CD8-positive, alpha-beta T cell (primary cell): ENCODE measurements at regions of chr3 and their contacts with region 1.

Region 1: DNA sequence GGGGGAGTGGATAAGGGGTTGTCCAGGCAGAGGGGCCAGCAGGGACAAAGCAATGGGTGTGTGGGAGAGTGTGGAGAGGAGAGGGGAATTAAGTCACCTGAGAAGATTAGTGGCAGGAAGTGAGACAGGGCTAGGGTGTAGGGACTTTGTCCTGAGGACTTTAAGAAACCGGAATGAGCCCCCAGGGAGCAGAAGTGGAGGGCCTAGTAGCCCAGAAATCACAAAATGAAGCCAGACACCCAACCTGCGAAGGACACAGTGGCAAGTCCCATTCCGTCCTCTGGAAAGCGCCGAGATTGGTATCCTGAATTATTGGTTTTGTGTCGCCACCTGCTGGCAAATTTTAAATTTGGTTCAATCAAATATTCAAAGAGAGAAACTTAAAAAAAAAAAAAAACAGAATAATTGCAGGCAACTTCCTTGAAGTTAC is 78.0 kb upstream of the SLC25A36 start:
- DNase-seq: peak in 6 of 9 experiments; percentile 0 to 59 (median 19)
- ATAC-seq: no peak
- H3K4me3 ChIP-seq: no peak overlapping the region
- H3K4me3 Mint-ChIP-seq: no peak overlapping the region
- H3K27ac ChIP-seq: no peak overlapping the region
- H3K27ac Mint-ChIP-seq: no peak overlapping the region
- H3K4me1 ChIP-seq: no peaks in the 10 kb centered on the region
- H3K4me1 Mint-ChIP-seq: peaks cover 6% of the 10 kb centered on the region
- H3K27me3 ChIP-seq: no peaks in the 10 kb centered on the region
- H3K27me3 Mint-ChIP-seq: peaks cover 3% of the 10 kb centered on the region
- CTCF ChIP-seq: peak; percentile 65

Region 2: DNA sequence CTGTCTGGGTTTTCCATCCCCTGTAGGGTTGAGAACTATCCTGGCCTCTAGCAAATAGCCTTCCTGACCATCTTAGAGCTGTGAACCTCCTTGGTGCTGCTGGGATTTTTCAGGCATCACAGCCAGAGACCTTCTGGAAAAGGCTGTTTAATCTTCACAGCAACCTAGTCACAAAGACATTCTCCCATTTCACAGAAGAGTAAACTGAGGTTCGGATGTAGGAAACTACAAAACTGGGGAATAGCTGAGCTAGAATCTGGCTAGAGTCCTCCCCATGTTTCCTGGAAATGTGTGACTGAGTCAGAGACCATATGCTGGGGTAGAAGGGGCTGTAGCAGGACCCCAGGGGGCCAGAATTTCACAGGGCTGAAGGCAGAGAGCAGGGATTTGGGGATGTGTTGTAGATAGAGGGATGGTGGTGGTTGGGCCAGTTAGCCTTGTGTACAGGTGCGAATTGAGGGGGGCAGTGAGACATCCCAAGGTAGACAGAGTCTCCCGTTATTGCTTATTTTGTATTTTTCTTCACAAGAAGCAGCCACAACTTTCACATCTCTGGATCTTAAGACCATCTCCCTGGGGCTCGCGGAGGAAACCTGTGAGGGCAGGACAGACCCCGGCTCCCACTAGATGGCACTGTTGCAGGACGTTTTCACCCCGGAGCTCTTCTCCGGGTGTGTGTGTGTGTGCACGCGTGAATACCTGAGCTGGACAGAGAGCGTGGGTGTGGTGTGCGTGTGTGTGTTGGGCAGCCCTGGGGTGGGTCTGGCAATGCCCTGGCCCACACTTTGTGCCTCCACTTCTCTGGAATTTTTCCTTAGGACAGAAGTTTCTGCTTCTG is 1752.0 kb before region 1 on chr3:
- CTCF ChIA-PET with region 1: no interaction called
- POLR2A ChIA-PET with region 1: no interaction called
- intact Hi-C with region 1: loop called in 1 of 2 experiments (anchors 5 kb)
- DNase-seq: peak; percentile 7 to 63 (median 49)
- ATAC-seq: no peak
- H3K4me3 ChIP-seq: no peak overlapping the region
- H3K4me3 Mint-ChIP-seq: no peak overlapping the region
- H3K27ac ChIP-seq: no peak overlapping the region
- H3K27ac Mint-ChIP-seq: no peak overlapping the region
- H3K4me1 ChIP-seq: no peaks in the 10 kb centered on the region
- H3K4me1 Mint-ChIP-seq: peaks cover 9% of the 10 kb centered on the region
- H3K27me3 ChIP-seq: no peaks in the 10 kb centered on the region
- H3K27me3 Mint-ChIP-seq: peaks cover 10% of the 10 kb centered on the region
- CTCF ChIP-seq: peak; percentile 58

Region 3: DNA sequence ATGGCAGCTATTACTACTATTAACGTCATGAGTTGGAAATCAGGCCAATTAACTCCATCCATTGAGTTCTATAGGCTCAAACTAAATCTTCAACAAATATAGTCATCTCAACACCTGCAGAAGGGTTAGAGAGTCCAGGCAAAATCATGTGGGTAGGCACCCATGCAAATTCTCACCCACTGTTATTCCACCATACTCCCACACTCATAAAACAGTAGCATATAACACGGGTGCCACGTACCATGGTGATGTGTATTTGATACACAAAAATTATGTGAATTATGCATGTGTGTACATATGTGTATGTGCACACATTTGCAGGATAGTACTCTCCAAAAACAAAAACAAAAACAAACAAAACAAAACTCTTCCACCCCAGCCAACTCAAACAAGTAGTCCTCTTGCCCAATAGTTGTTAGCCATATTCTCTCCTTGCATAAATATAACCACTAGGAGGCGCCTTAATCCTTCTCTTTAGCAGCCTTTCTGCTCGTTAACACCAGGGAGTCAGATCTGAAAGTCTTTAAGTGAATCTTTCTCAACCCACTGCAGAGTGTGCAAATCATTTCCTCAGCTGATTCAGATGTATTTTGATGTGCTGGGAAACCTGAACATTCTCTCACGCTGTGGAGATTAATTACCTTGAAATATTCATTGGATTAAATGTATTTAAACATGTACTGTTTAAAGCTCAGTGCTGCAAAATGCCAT is 1436.2 kb before region 1 on chr3:
- CTCF ChIA-PET with region 1: interaction called, 4 read pairs
- POLR2A ChIA-PET with region 1: no interaction called
- intact Hi-C with region 1: loop called in 1 of 2 experiments (anchors 1 kb)
- DNase-seq: peak in 2 of 9 experiments; percentile 47 to 58
- ATAC-seq: no peak
- H3K4me3 ChIP-seq: no peak overlapping the region
- H3K4me3 Mint-ChIP-seq: no peak overlapping the region
- H3K27ac ChIP-seq: no peak overlapping the region
- H3K27ac Mint-ChIP-seq: no peak overlapping the region
- H3K4me1 ChIP-seq: no peaks in the 10 kb centered on the region
- H3K4me1 Mint-ChIP-seq: peaks cover 4% of the 10 kb centered on the region
- H3K27me3 ChIP-seq: peaks cover 0 to 2% of the 10 kb centered on the region in 2 experiments
- H3K27me3 Mint-ChIP-seq: no peaks in the 10 kb centered on the region
- CTCF ChIP-seq: peak; percentile 73

Region 4: GRCh38 chr3:139935016-139935865 is 928.4 kb before region 1 on chr3 and contains the start of gene CLSTN2:
- CTCF ChIA-PET with region 1: no interaction called
- POLR2A ChIA-PET with region 1: no interaction called
- intact Hi-C with region 1: loop called in 1 of 2 experiments (anchors 10 kb)
- DNase-seq: no peak
- ATAC-seq: no peak
- H3K4me3 ChIP-seq: no peak within 1 kb of the TSS
- H3K4me3 Mint-ChIP-seq: peak within 1 kb of the TSS; percentile 26
- H3K27ac ChIP-seq: no peak within 1 kb of the TSS
- H3K27ac Mint-ChIP-seq: no peak within 1 kb of the TSS
- H3K4me1 ChIP-seq: no peaks in the 10 kb centered on the region
- H3K4me1 Mint-ChIP-seq: peaks cover 9% of the 10 kb centered on the region
- H3K27me3 ChIP-seq: peaks cover 5 to 7% of the 10 kb centered on the region in 2 experiments
- H3K27me3 Mint-ChIP-seq: peaks cover 42% of the 10 kb centered on the region
- CTCF ChIP-seq: no peak
- total RNA-seq, gene CLSTN2: not detected

Region 5: DNA sequence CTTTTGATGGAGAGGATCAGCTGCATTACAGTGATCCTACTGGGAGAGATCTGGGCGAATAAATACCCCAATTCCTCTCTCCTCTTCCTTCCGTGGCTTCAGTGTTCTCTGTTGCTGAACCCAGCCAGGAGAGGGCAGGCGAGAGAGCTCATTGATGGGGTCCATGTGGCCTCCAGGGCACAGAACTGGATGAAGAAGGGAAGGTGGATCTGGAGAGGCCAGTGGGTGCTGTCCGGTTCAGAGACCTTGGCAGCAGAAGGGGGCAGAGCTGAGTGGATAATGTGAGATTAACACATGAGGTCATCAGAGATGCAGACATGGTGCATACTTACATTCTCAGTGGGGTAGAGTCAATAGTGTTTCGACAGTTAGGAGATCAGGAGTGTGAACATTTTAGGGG is 735.0 kb before region 1 on chr3:
- CTCF ChIA-PET with region 1: no interaction called
- POLR2A ChIA-PET with region 1: no interaction called
- intact Hi-C with region 1: loop called in 1 of 2 experiments (anchors 2 kb)
- DNase-seq: peak in 2 of 9 experiments; percentile 1 to 5
- ATAC-seq: no peak
- H3K4me3 ChIP-seq: no peak overlapping the region
- H3K4me3 Mint-ChIP-seq: no peak overlapping the region
- H3K27ac ChIP-seq: no peak overlapping the region
- H3K27ac Mint-ChIP-seq: no peak overlapping the region
- H3K4me1 ChIP-seq: no peaks in the 10 kb centered on the region
- H3K4me1 Mint-ChIP-seq: no peaks in the 10 kb centered on the region
- H3K27me3 ChIP-seq: no peaks in the 10 kb centered on the region
- H3K27me3 Mint-ChIP-seq: no peaks in the 10 kb centered on the region
- CTCF ChIP-seq: no peak

Region 6: DNA sequence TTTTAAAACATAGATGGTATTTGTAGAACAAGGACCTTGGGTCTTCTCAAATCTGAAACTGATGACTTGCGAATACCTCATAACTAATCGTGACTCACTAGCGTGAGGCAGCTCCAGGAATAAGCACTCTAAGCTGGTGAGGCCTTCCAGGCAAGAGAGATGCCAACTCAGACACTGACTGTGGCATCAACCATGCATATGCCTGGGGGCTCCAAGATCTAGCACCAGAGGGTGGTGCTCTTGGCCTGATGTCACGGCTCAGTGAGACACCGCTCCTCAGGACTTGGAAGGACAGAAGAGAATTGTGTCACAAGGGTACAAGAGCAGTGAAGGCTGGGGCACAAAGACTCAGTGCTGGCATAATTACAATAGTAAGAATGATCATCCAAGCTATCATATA is 310.7 kb before region 1 on chr3:
- CTCF ChIA-PET with region 1: no interaction called
- POLR2A ChIA-PET with region 1: no interaction called
- intact Hi-C with region 1: loop called (anchors 2 to 10 kb)
- DNase-seq: peak in 1 of 9 experiments; percentile 3
- ATAC-seq: no peak
- H3K4me3 ChIP-seq: no peak overlapping the region
- H3K4me3 Mint-ChIP-seq: no peak overlapping the region
- H3K27ac ChIP-seq: no peak overlapping the region
- H3K27ac Mint-ChIP-seq: no peak overlapping the region
- H3K4me1 ChIP-seq: no peaks in the 10 kb centered on the region
- H3K4me1 Mint-ChIP-seq: no peaks in the 10 kb centered on the region
- H3K27me3 ChIP-seq: no peaks in the 10 kb centered on the region
- H3K27me3 Mint-ChIP-seq: no peaks in the 10 kb centered on the region
- CTCF ChIP-seq: no peak

Region 7: GRCh38 chr3:140715027-140715426 is 148.6 kb before region 1 on chr3:
- CTCF ChIA-PET with region 1: no interaction called
- POLR2A ChIA-PET with region 1: no interaction called
- intact Hi-C with region 1: no loop called
- DNase-seq: no peak
- ATAC-seq: no peak
- H3K4me3 ChIP-seq: no peak overlapping the region
- H3K4me3 Mint-ChIP-seq: no peak overlapping the region
- H3K27ac ChIP-seq: no peak overlapping the region
- H3K27ac Mint-ChIP-seq: no peak overlapping the region
- H3K4me1 ChIP-seq: no peaks in the 10 kb centered on the region
- H3K4me1 Mint-ChIP-seq: no peaks in the 10 kb centered on the region
- H3K27me3 ChIP-seq: no peaks in the 10 kb centered on the region
- H3K27me3 Mint-ChIP-seq: no peaks in the 10 kb centered on the region
- CTCF ChIP-seq: no peak